Ovary (tissue), 10 donors: ENCODE measurements at regions of chr4 and their contacts with region 1.

Region 1: DNA sequence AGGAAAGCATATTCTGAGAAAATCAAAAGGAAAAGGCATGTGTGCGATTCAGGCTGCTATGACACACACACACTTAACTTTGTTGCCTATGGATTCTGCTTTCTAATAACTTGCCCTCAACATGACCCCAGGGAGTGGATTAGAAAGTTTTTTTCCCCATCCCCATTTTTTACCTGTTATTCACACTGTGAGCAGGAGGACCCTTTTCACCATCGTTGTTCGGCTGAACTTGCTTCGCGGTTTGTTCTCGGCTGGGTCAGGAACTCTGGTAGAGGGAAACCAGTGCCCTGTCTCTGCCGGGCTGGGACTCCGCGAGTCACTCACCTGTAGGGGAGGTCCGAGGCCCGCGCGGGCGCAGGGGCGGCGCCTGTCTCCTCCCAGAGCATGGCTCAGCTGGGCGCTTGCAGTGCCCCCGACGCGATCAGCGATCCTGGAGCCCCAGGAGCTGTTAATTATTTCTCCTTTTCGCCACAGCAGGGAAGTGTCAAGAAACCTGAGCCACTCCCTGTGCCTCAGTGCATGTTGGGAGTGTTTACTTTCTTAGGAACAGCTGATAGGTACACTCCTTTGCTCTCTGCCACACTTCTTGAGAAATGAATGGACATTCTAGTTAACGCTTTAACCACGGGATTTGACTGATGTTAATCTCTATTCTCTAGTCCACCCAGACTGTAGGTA is at the start of gene RASSF6:
- DNase-seq: peak in 4 of 5 donors; percentile 21 to 46 (median 22)
- H3K4me3 ChIP-seq: peak within 1 kb of the TSS; percentile 22
- H3K27ac ChIP-seq: no peak within 1 kb of the TSS
- H3K4me1 ChIP-seq: no peaks in the 10 kb centered on the region
- H3K27me3 ChIP-seq: no peaks in the 10 kb centered on the region
- CTCF ChIP-seq: no peak
- EP300 ChIP-seq: no peak
- POLR2A ChIP-seq: no peak
- total RNA-seq, gene RASSF6: 0.38 to 1.6 (median 0.97) TPM

Region 2: GRCh38 chr4:73593631-73594241 is 26.5 kb before region 1 on chr4:
- intact Hi-C with region 1: loop called in 1 of 4 experiments (anchors 2 kb)
- DNase-seq: no peak
- H3K4me3 ChIP-seq: no peak overlapping the region
- H3K27ac ChIP-seq: no peak overlapping the region
- H3K4me1 ChIP-seq: peaks cover 3% of the 10 kb centered on the region
- H3K27me3 ChIP-seq: no peaks in the 10 kb centered on the region
- CTCF ChIP-seq: no peak
- EP300 ChIP-seq: no peak
- POLR2A ChIP-seq: no peak

Region 3: DNA sequence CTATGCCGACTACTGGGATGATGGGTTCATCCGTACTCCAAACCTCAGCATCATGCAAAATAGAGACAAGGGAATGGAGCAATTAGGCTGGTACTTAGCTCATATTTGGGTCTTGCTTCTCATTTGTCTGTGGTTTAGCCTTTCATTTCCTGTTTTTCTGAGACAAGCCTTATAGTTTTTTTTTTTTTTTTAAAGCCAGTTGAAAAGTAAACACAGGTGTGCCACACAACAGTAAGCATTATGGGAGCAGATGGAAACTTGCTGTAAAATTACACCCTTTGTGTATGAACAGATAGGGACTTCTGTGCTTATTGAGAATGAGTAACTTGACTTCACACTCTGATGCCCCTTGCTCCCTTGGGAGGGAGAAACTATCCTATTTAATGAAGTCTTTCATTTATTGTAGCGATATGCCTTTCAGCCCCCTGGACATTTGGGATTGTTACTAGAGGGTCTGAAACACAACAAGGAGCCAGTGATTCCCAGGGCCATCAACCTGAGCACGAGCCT is 13.7 kb before region 1 on chr4:
- intact Hi-C with region 1: no loop called
- DNase-seq: no peak
- H3K4me3 ChIP-seq: no peak overlapping the region
- H3K27ac ChIP-seq: no peak overlapping the region
- H3K4me1 ChIP-seq: no peaks in the 10 kb centered on the region
- H3K27me3 ChIP-seq: no peaks in the 10 kb centered on the region
- CTCF ChIP-seq: no peak
- EP300 ChIP-seq: no peak
- POLR2A ChIP-seq: no peak

Region 4: GRCh38 chr4:73653695-73654106 is 33.4 kb after region 1 on chr4:
- intact Hi-C with region 1: no loop called
- DNase-seq: peak in 2 of 5 donors; percentile 20 to 41
- H3K4me3 ChIP-seq: no peak overlapping the region
- H3K27ac ChIP-seq: no peak overlapping the region
- H3K4me1 ChIP-seq: no peaks in the 10 kb centered on the region
- H3K27me3 ChIP-seq: no peaks in the 10 kb centered on the region
- CTCF ChIP-seq: peak in 2 of 3 donors; percentile 45 to 55
- EP300 ChIP-seq: no peak
- POLR2A ChIP-seq: no peak